Activated B cell treated with CpG ODN at 0.5 μM for 24 hours (primary cell): ENCODE measurements at regions of chr11 and their contacts with region 1.

Region 1: DNA sequence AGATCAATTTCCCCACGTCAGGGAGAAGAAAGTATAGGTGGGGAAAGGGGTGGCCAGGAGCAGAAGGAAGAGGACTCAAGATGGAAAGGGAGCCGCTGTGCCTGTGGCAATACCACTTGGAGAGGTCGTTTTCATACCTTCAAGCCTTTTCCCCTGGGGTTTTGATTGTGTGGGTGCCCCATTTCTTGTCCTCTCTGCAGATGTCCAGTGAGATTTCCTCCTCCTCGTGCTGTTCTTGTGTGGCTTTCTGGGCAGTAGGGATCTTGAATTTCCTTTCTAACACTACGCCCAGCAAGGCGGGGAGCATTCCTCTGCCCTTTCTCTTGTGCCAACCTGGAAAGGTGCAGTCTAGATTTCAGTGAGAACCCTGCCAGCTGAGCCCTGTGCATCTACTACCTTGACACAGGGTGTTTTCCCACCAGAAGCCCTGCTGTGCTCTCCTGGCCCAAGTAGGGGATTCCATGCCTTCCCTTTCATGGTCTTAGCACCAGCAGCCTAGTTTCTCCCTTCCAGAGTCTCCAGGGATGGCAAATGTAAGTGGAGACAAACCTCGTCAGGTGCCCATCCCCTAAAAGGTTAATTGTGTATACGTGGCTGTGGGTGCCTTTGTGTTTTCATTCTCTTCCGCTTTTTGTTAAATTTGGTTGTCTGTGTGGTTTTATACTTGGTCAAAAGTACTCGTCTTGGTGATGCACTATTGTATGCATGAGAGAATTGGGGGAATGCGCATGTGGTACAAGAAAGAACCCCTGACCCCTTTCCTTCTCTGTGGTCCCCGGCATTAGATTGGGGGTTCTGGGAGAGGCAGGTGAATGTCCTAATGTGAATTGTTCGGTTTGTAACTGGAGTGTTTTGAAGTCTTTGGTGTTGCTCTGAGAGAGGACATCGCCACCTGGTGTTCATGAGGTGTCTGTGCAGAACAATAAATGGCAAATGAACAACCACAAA is 71.4 kb upstream of the MPEG1 start:
- DNase-seq: peak; percentile 55
- ATAC-seq: peak; percentile 73
- H3K4me3 Mint-ChIP-seq: peak overlapping the region; percentile 70
- H3K27ac Mint-ChIP-seq: peak overlapping the region; percentile 87
- H3K4me1 Mint-ChIP-seq: peaks cover 57% of the 10 kb centered on the region
- H3K27me3 Mint-ChIP-seq: no peaks in the 10 kb centered on the region
- CTCF ChIP-seq: peak; percentile 59

Region 2: GRCh38 chr11:58994171-58994570 is 289.9 kb before region 1 on chr11:
- CTCF ChIA-PET with region 1: no interaction called
- POLR2A ChIA-PET with region 1: no interaction called
- intact Hi-C with region 1: no loop called
- DNase-seq: no peak
- ATAC-seq: no peak
- H3K4me3 Mint-ChIP-seq: no peak overlapping the region
- H3K27ac Mint-ChIP-seq: no peak overlapping the region
- H3K4me1 Mint-ChIP-seq: peaks cover 16% of the 10 kb centered on the region
- H3K27me3 Mint-ChIP-seq: no peaks in the 10 kb centered on the region
- CTCF ChIP-seq: no peak

Region 3: GRCh38 chr11:59097113-59097708 is 186.9 kb before region 1 on chr11:
- CTCF ChIA-PET with region 1: no interaction called
- POLR2A ChIA-PET with region 1: no interaction called
- intact Hi-C with region 1: loop called (anchors 5 kb)
- DNase-seq: no peak
- ATAC-seq: peak; percentile 23
- H3K4me3 Mint-ChIP-seq: peak overlapping the region; percentile 73
- H3K27ac Mint-ChIP-seq: peak overlapping the region; percentile 91
- H3K4me1 Mint-ChIP-seq: peaks cover 91% of the 10 kb centered on the region
- H3K27me3 Mint-ChIP-seq: no peaks in the 10 kb centered on the region
- CTCF ChIP-seq: no peak

Region 4: GRCh38 chr11:59216641-59217564 is 67.2 kb before region 1 on chr11:
- CTCF ChIA-PET with region 1: interaction called, 5 read pairs
- POLR2A ChIA-PET with region 1: interaction called, 4 read pairs
- intact Hi-C with region 1: loop called (anchors 1 kb)
- DNase-seq: peak; percentile 35
- ATAC-seq: peak; percentile 69
- H3K4me3 Mint-ChIP-seq: peak overlapping the region; percentile 52
- H3K27ac Mint-ChIP-seq: peak overlapping the region; percentile 91
- H3K4me1 Mint-ChIP-seq: peaks cover 100% of the 10 kb centered on the region
- H3K27me3 Mint-ChIP-seq: no peaks in the 10 kb centered on the region
- CTCF ChIP-seq: no peak

Region 5: DNA sequence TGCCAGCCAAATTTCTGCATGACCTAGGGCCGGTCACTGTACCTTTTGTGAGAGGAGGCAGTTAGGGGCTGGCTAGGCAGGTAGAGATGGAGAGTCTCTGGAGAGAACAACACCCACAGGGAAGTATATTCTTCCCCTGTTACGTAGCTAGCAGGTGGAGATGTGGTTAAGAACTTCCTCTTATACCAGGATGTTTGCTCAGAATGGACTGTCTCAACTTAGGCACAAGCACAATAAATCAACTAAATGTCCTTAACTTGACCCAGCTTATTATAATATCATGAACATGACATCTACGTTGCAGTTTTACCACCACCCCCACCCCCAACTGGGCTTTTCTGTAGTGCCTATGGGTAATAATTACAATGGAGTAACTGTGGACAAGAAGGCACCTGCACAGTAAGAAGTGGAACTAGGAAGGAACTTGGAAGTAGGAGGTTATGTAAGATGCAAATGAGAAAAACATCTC is 10.7 kb before region 1 on chr11:
- CTCF ChIA-PET with region 1: interaction called, 4 read pairs
- POLR2A ChIA-PET with region 1: interaction called, 6 read pairs
- intact Hi-C with region 1: loop called (anchors 1 kb)
- DNase-seq: no peak
- ATAC-seq: peak; percentile 83
- H3K4me3 Mint-ChIP-seq: peak overlapping the region; percentile 70
- H3K27ac Mint-ChIP-seq: peak overlapping the region; percentile 92
- H3K4me1 Mint-ChIP-seq: peaks cover 91% of the 10 kb centered on the region
- H3K27me3 Mint-ChIP-seq: no peaks in the 10 kb centered on the region
- CTCF ChIP-seq: no peak